ENCODE measurements at regions of chr5 and their contacts with region 1.

Region 1: DNA sequence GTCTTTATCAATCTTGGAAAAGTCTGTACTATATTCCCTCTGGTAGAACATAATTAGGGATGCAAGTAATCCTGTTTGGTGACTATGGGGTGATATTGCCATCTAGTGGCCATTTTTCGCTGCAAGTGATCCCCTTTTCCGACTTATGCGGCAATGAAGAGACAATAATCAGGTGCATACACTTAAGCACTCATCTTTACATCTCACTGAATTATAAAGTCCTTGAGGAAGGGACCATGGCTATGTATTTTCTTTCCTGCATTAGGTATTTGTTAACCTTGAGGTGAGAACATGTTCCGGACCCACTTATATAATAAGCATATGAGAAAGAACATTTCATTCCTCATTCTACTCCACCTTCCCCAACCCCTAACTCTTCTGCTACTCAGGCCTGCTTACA is 19.6 kb upstream of the LIX1 start:
- DNase-seq: peak; percentile 56
- H3K4me3 ChIP-seq: no peak overlapping the region
- H3K27ac ChIP-seq: no peak overlapping the region
- H3K4me1 ChIP-seq: no peaks in the 10 kb centered on the region
- H3K27me3 ChIP-seq: no peaks in the 10 kb centered on the region
- CTCF ChIP-seq: peak; percentile 76 to 84 (median 82)

Region 2: DNA sequence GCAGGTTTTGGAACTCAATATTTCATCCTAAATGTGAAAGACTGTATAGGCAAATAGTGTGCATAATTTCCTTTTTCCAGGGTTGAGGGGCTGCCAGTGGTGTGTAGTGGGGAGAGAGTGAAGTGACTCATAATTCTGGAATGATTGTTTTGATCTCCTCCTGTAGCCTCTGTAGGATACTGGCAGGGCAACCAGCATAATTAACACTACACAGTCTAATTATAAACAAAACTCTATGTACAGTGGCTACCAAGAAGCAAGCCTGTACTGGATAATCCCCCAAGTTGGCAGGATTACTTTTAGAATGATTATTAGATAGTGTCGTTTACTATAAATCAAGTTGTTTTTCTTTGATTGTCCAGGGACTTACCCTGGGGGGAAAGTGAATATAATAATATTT is 194.0 kb before region 1 on chr5:
- dilution Hi-C with region 1: no loop called
- DNase-seq: no peak
- H3K4me3 ChIP-seq: no peak overlapping the region
- H3K27ac ChIP-seq: peak overlapping the region; percentile 33
- H3K4me1 ChIP-seq: peaks cover 20% of the 10 kb centered on the region
- H3K27me3 ChIP-seq: no peaks in the 10 kb centered on the region
- CTCF ChIP-seq: no peak

Region 3: DNA sequence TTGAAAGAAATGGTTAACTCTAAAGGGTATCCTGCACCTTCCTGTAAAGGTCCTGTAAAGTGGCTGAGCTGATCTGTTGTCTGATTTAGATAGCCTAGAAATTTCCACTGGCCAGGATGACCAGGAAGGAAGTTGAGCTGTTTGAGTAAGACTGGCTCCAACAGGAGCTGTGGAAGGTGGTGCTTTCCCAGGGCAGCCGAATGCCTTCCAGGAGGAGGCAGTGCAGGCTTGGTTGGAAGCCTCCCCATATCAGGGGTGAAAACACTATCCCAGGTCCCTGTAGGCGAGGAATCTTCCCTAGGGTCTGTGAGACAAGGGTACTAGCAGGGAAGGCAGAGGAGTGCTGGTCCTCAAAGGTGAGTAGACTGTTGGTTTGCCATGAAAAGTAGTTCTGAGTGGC is 118.0 kb before region 1 on chr5:
- dilution Hi-C with region 1: loop called (anchors 25 kb)
- DNase-seq: no peak
- H3K4me3 ChIP-seq: no peak overlapping the region
- H3K27ac ChIP-seq: no peak overlapping the region
- H3K4me1 ChIP-seq: no peaks in the 10 kb centered on the region
- H3K27me3 ChIP-seq: no peaks in the 10 kb centered on the region
- CTCF ChIP-seq: peak; percentile 61 to 75 (median 68)